GM12878 (cell line): ENCODE measurements at regions of chr9 and their contacts with region 1.

Region 1: DNA sequence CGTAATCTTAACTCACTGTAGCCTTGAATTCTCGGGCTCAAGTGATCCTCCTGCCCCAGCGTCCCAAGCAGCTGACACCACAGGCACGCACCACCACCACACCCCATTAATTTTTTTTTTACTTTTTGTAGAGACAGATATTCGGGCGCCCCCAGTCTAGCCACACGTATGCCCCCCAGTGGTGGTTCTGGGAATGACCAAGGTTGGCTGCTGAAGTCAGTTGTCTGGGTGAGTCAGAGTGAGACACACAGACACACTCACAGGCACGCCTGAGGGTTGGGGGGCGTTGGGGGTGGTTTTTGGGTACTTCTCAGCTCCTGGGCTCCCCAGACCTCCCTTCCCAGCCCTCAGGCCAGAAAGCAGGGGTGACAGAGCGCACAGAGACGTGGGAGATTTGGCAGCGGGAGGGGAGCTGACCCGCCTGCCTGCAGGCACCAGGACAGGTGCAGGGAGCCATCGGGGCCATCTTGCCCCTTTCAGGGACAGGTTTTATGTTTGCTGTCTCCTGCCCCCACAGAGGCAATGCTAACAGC is 4.2 kb upstream of the ENTPD8 start:
- DNase-seq: peak; percentile 40
- ATAC-seq: peak; percentile 91
- H3K4me3 ChIP-seq: no peak overlapping the region
- H3K27ac ChIP-seq: no peak overlapping the region
- H3K4me1 ChIP-seq: peaks cover 8% of the 10 kb centered on the region
- H3K27me3 ChIP-seq: no peaks in the 10 kb centered on the region
- CTCF ChIP-seq: peak; percentile 74 to 86 (median 83)
- EP300 ChIP-seq: no peak
- POLR2A ChIP-seq: no peak
- RAD21 ChIP-seq: peak; percentile 76

Region 2: DNA sequence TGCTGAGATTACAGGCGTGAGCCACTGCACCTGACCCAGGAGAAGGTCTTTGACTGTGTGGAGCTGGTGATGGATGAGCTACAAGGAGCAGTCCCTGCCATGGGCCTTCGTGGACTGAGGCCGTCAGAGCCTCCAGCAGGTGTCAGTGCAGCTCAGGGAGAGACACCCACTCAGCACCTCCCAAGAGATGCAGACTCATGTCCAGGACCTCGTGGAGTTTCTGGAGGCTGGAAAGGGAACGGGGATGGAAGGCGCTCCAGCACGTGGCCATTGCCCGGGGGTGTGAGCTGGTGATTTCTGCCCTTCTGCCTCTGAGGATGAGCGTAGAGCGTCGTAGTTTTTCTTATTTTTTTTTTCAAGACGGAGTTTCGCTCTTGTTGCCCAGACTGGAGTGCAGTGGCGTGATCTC is 158.4 kb before region 1 on chr9:
- CTCF ChIA-PET with region 1: interaction called, 25 read pairs
- POLR2A ChIA-PET with region 1: no interaction called
- RAD21 ChIA-PET with region 1: no interaction called
- SMC1A ChIA-PET with region 1: interaction called, 7 read pairs
- in situ Hi-C with region 1: loop called (anchors 5 kb)
- intact Hi-C with region 1: loop called (anchors 2 kb)
- DNase-seq: no peak
- ATAC-seq: peak; percentile 87
- H3K4me3 ChIP-seq: no peak overlapping the region
- H3K27ac ChIP-seq: no peak overlapping the region
- H3K4me1 ChIP-seq: peaks cover 16% of the 10 kb centered on the region
- H3K27me3 ChIP-seq: no peaks in the 10 kb centered on the region
- CTCF ChIP-seq: peak; percentile 45 to 59 (median 52); a peak in 5 of 6 replicates
- EP300 ChIP-seq: no peak
- POLR2A ChIP-seq: no peak
- RAD21 ChIP-seq: peak; percentile 62

Region 3: GRCh38 chr9:137295238-137295811 is 150.0 kb before region 1 on chr9:
- CTCF ChIA-PET with region 1: interaction called, 5 read pairs
- POLR2A ChIA-PET with region 1: interaction called, 3 read pairs
- RAD21 ChIA-PET with region 1: no interaction called
- SMC1A ChIA-PET with region 1: interaction called, 3 read pairs
- in situ Hi-C with region 1: loop called (anchors 5 kb)
- intact Hi-C with region 1: loop called (anchors 2 kb)
- DNase-seq: no peak
- ATAC-seq: peak; percentile 87
- H3K4me3 ChIP-seq: peak overlapping the region; percentile 36; the same call in 1 of the 2 replicates
- H3K27ac ChIP-seq: no peak overlapping the region
- H3K4me1 ChIP-seq: peaks cover 11% of the 10 kb centered on the region
- H3K27me3 ChIP-seq: no peaks in the 10 kb centered on the region; a peak in 1 of 4 replicates
- CTCF ChIP-seq: peak; percentile 50 to 69 (median 53); a peak in 5 of 6 replicates
- EP300 ChIP-seq: no peak
- POLR2A ChIP-seq: no peak
- RAD21 ChIP-seq: peak; percentile 60

Region 4: GRCh38 chr9:137302176-137302994 is 143.0 kb before region 1 on chr9 and contains the start of gene NRARP:
- CTCF ChIA-PET with region 1: interaction called, 10 read pairs
- POLR2A ChIA-PET with region 1: interaction called, 3 read pairs
- RAD21 ChIA-PET with region 1: interaction called, 6 read pairs
- SMC1A ChIA-PET with region 1: interaction called, 6 read pairs
- in situ Hi-C with region 1: no loop called
- intact Hi-C with region 1: no loop called
- DNase-seq: no peak
- ATAC-seq: peak; percentile 72
- H3K4me3 ChIP-seq: peak within 1 kb of the TSS; percentile 70
- H3K27ac ChIP-seq: no peak within 1 kb of the TSS
- H3K4me1 ChIP-seq: peaks cover 35% of the 10 kb centered on the region
- H3K27me3 ChIP-seq: no peaks in the 10 kb centered on the region; a peak in 1 of 4 replicates
- CTCF ChIP-seq: peak; percentile 49 to 65 (median 53)
- EP300 ChIP-seq: no peak
- POLR2A ChIP-seq: peak; percentile 89
- RAD21 ChIP-seq: peak; percentile 34
- polyA plus RNA-seq, gene NRARP: not detected

Region 5: GRCh38 chr9:137380606-137381005 is 64.7 kb before region 1 on chr9:
- CTCF ChIA-PET with region 1: no interaction called
- POLR2A ChIA-PET with region 1: no interaction called
- RAD21 ChIA-PET with region 1: no interaction called
- SMC1A ChIA-PET with region 1: no interaction called
- in situ Hi-C with region 1: no loop called
- intact Hi-C with region 1: no loop called
- DNase-seq: no peak
- ATAC-seq: no peak
- H3K4me3 ChIP-seq: no peak overlapping the region
- H3K27ac ChIP-seq: no peak overlapping the region
- H3K4me1 ChIP-seq: no peaks in the 10 kb centered on the region
- H3K27me3 ChIP-seq: no peaks in the 10 kb centered on the region
- CTCF ChIP-seq: no peak
- EP300 ChIP-seq: no peak
- POLR2A ChIP-seq: no peak
- RAD21 ChIP-seq: no peak

Region 6: GRCh38 chr9:137390543-137391410 is 54.6 kb before region 1 on chr9:
- CTCF ChIA-PET with region 1: no interaction called
- POLR2A ChIA-PET with region 1: no interaction called
- RAD21 ChIA-PET with region 1: no interaction called
- SMC1A ChIA-PET with region 1: no interaction called
- in situ Hi-C with region 1: no loop called
- intact Hi-C with region 1: no loop called
- DNase-seq: no peak
- ATAC-seq: no peak
- H3K4me3 ChIP-seq: no peak overlapping the region
- H3K27ac ChIP-seq: no peak overlapping the region
- H3K4me1 ChIP-seq: no peaks in the 10 kb centered on the region
- H3K27me3 ChIP-seq: no peaks in the 10 kb centered on the region
- CTCF ChIP-seq: no peak
- EP300 ChIP-seq: no peak
- POLR2A ChIP-seq: no peak
- RAD21 ChIP-seq: no peak

Region 7: GRCh38 chr9:137423004-137423874 is 22.1 kb before region 1 on chr9 and contains the starts of genes EXD3 and NOXA1:
- CTCF ChIA-PET with region 1: interaction called, 16 read pairs
- POLR2A ChIA-PET with region 1: interaction called, 5 read pairs
- RAD21 ChIA-PET with region 1: interaction called, 4 read pairs
- SMC1A ChIA-PET with region 1: no interaction called
- in situ Hi-C with region 1: no loop called
- intact Hi-C with region 1: loop called (anchors 2 kb)
- DNase-seq: peak; percentile 48
- ATAC-seq: peak; percentile 91
- H3K4me3 ChIP-seq: peak within 1 kb of the TSS; percentile 84
- H3K27ac ChIP-seq: peak within 1 kb of the TSS; percentile 41
- H3K4me1 ChIP-seq: no peaks in the 10 kb centered on the region; the same call in 1 of the 2 replicates
- H3K27me3 ChIP-seq: no peaks in the 10 kb centered on the region; a peak in 2 of 4 replicates
- CTCF ChIP-seq: peak; percentile 64 to 82 (median 73); a peak in 5 of 6 replicates
- EP300 ChIP-seq: no peak
- POLR2A ChIP-seq: peak; percentile 70
- RAD21 ChIP-seq: peak; percentile 45
- polyA plus RNA-seq, gene EXD3: 0.21 to 0.51 TPM
- polyA plus RNA-seq, gene NOXA1: not detected

Region 8: DNA sequence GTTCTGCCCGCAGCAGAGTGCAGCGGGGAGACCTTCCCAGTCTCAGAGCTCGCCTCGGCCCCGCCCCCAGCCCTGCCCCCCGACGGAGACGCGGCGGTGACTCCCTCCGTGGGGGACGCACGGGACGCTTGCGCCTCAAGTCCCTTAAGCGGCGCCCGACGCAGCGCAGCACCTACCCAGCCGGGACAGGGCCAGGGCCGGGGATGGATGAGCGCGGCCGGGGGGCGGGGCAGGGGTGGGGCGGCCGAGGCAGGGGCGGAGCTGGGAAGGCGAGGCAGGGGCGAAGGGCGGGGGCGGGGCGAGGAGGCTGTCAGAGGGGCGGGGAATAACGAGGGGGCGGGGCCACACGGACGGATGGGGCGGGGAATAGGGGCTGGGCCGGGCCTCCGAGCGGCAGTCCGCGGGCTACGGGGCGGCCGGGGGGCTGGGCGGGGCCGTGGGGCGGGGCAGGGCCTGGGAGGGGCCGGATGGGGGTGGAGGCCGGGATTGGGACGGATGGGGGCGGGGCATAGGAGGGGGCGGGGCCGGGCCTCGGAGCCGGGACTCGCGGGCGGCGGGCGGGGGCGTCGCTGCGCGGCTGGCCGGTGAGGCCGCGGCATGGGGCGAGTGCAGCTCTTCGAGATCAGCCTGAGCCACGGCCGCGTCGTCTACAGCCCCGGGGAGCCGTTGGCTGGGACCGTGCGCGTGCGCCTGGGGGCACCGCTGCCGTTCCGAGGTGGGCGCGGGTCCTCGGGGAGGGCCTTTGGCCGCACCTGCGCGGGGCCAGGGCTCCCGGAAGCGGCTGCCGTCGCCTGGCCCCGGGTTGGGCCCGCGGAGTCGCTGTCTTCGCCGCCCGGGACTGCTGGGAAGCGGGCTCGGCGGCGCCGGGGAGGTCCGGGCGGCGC is 160.0 kb after region 1 on chr9 and contains the start of gene ARRDC1:
- CTCF ChIA-PET with region 1: no interaction called
- POLR2A ChIA-PET with region 1: no interaction called
- RAD21 ChIA-PET with region 1: no interaction called
- SMC1A ChIA-PET with region 1: no interaction called
- in situ Hi-C with region 1: no loop called
- intact Hi-C with region 1: no loop called
- DNase-seq: peak; percentile 45
- ATAC-seq: peak; percentile 93
- H3K4me3 ChIP-seq: peak within 1 kb of the TSS; percentile 76
- H3K27ac ChIP-seq: peak within 1 kb of the TSS; percentile 35; the same call in 1 of the 2 replicates
- H3K4me1 ChIP-seq: peaks cover 11% of the 10 kb centered on the region
- H3K27me3 ChIP-seq: no peaks in the 10 kb centered on the region
- CTCF ChIP-seq: no peak
- EP300 ChIP-seq: no peak
- POLR2A ChIP-seq: peak; percentile 91
- RAD21 ChIP-seq: no peak
- polyA plus RNA-seq, gene ARRDC1: 0.23 to 0.97 TPM